Ascending aorta (tissue), 2 donors: ENCODE measurements at regions of chr7 and their contacts with region 1.

Region 1: GRCh38 chr7:23597094-23598091 is at the start of gene CCDC126:
- DNase-seq: peak; percentile 75 to 96
- H3K4me3 ChIP-seq: peak within 1 kb of the TSS; percentile 72 to 94
- H3K27ac ChIP-seq: peak within 1 kb of the TSS; percentile 94 to 100
- H3K4me1 ChIP-seq: peaks cover 0 to 8% of the 10 kb centered on the region in 2 donors
- H3K27me3 ChIP-seq: no peaks in the 10 kb centered on the region
- CTCF ChIP-seq: no peak
- total RNA-seq, gene CCDC126: 140 TPM

Region 2: DNA sequence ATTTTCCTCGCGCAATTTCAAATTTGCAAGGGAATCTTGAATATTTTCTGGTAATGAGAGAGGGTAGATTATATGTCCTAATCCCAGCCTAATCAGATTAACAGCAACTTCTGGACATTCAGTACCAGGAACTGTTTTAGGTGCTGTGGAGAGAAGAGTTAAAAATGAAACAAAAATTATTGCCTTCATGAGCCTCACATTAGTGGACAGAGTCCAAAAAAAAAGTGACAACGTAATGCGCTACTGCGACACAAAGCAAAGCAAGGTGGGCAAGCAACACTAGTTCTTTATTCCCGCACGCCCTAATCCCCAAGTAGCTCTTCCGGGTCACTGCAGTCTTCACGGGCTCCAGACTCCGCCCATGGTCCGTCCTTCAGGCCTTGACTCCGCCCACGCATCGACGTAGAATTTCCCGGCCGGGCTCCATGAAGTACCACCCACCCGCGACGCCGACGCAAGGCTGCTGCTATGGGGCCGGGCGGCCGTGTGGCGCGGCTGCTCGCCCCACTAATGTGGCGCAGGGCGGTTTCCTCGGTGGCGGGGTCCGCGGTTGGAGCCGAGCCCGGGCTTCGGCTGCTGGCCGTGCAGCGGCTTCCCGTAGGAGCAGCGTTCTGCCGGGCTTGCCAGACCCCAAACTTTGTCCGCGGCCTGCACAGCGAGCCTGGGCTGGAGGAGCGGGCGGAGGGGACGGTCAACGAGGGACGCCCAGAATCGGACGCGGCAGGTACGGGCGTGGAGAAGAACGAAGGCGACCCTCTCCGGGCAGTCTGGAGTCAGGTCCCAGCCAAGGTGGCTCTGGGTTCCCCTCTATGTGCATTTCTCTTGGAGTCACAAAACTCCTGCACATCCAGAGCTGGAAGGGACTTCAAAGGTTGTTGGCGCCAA is 298.3 kb before region 1 on chr7 and contains the start of gene MALSU1:
- intact Hi-C with region 1: loop called (anchors 5 kb)
- DNase-seq: peak; percentile 79 to 99
- H3K4me3 ChIP-seq: peak within 1 kb of the TSS; percentile 78 to 91
- H3K27ac ChIP-seq: peak within 1 kb of the TSS; percentile 75 to 79
- H3K4me1 ChIP-seq: peaks cover 8 to 17% of the 10 kb centered on the region in 2 donors
- H3K27me3 ChIP-seq: no peaks in the 10 kb centered on the region
- CTCF ChIP-seq: no peak
- total RNA-seq, gene MALSU1: 22.4 TPM

Region 3: DNA sequence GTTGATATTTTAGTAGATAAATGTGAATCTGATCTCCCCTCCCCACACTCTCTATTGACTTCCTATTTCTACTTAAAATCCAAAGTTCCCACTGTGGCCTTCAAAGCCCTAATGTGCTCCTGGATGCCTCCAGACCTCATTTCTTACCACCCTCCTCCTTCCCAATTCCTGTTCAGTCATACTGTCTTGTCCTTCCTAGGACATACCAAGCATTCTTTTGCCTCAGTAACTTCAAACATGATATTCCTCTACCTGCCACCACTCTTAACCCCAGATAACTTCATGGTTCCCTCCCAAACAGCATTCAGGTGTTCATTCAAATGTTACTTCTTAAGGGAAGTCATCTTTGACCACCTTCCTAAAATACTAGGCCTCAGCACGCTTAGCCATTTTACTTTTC is 48.4 kb after region 1 on chr7:
- intact Hi-C with region 1: no loop called
- DNase-seq: no peak
- H3K4me3 ChIP-seq: no peak overlapping the region
- H3K27ac ChIP-seq: no peak overlapping the region
- H3K4me1 ChIP-seq: no peaks in the 10 kb centered on the region
- H3K27me3 ChIP-seq: no peaks in the 10 kb centered on the region
- CTCF ChIP-seq: no peak

Region 4: DNA sequence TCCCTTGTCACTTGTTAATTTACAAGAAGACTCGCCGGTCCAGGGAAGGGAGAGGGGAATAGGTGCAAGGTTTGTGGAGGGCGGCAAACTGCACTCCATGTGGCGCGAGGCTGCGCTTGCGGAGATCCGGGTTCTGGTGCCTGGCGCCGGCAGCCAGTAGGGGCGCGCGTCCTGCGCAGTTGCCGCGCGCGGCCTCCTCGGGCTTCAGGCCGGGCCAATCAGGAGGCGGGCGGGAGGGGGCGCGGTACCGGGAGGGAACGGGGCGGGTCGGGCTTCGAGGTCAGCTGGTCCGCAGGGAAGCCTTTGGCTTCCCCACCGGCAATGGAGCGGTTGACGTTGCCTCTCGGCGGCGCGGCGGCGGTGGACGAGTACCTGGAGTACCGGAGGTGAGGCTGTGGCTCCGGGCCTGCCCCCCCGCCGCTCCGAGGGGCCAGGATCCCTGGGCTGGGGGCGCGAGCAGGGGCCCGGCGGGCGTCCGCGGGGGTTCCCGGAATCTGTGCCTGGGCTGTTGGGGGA is 82.6 kb after region 1 on chr7 and contains the start of gene FAM221A:
- intact Hi-C with region 1: loop called (anchors 1 kb)
- DNase-seq: peak; percentile 30 to 93
- H3K4me3 ChIP-seq: peak within 1 kb of the TSS; percentile 84 to 95
- H3K27ac ChIP-seq: peak within 1 kb of the TSS; percentile 85 to 87
- H3K4me1 ChIP-seq: peaks cover 0 to 5% of the 10 kb centered on the region in 2 donors
- H3K27me3 ChIP-seq: no peaks in the 10 kb centered on the region
- CTCF ChIP-seq: peak; percentile 34 to 88 (median 87)
- total RNA-seq, gene FAM221A: 10.1 TPM

Region 5: GRCh38 chr7:25125137-25125946 is 1527.9 kb after region 1 on chr7 and contains the start of gene CYCS:
- intact Hi-C with region 1: loop called (anchors 5 kb)
- DNase-seq: peak; percentile 98 to 100
- H3K4me3 ChIP-seq: peak within 1 kb of the TSS; percentile 82 to 100
- H3K27ac ChIP-seq: peak within 1 kb of the TSS; percentile 90 to 99
- H3K4me1 ChIP-seq: peaks cover 0 to 4% of the 10 kb centered on the region in 2 donors
- H3K27me3 ChIP-seq: no peaks in the 10 kb centered on the region
- CTCF ChIP-seq: no peak
- total RNA-seq, gene CYCS: 11.5 TPM